Activated naive CD4-positive, alpha-beta T cell treated with anti-CD3 and anti-CD28 coated beads for 36 hours (primary cell): ENCODE measurements at regions of chr10 and their contacts with region 1.

Region 1: GRCh38 chr10:68955832-68956532 is at the start of gene DDX21:
- DNase-seq: peak; percentile 94
- H3K4me3 Mint-ChIP-seq: peak within 1 kb of the TSS; percentile 100
- H3K27ac Mint-ChIP-seq: peak within 1 kb of the TSS; percentile 100
- H3K4me1 Mint-ChIP-seq: peaks cover 44% of the 10 kb centered on the region
- H3K27me3 Mint-ChIP-seq: no peaks in the 10 kb centered on the region
- total RNA-seq, gene DDX21: 155 to 164 TPM

Region 2: GRCh38 chr10:68988530-68989316 is 32.7 kb after region 1 on chr10 and contains the start of gene KIFBP:
- CTCF ChIA-PET with region 1: interaction called, 10 read pairs
- intact Hi-C with region 1: loop called (anchors 1 kb)
- DNase-seq: peak; percentile 94
- H3K4me3 Mint-ChIP-seq: peak within 1 kb of the TSS; percentile 98
- H3K27ac Mint-ChIP-seq: peak within 1 kb of the TSS; percentile 92
- H3K4me1 Mint-ChIP-seq: peaks cover 44% of the 10 kb centered on the region
- H3K27me3 Mint-ChIP-seq: no peaks in the 10 kb centered on the region
- total RNA-seq, gene KIFBP: 10.1 to 10.6 TPM

Region 3: GRCh38 chr10:69092959-69093850 is 137.2 kb after region 1 on chr10:
- CTCF ChIA-PET with region 1: interaction called, 10 read pairs
- intact Hi-C with region 1: loop called (anchors 1 kb)
- DNase-seq: peak; percentile 95
- H3K4me3 Mint-ChIP-seq: peak overlapping the region; percentile 32
- H3K27ac Mint-ChIP-seq: peak overlapping the region; percentile 81
- H3K4me1 Mint-ChIP-seq: peaks cover 52% of the 10 kb centered on the region
- H3K27me3 Mint-ChIP-seq: no peaks in the 10 kb centered on the region

Region 4: GRCh38 chr10:69222157-69223027 is 266.4 kb after region 1 on chr10:
- CTCF ChIA-PET with region 1: no interaction called
- intact Hi-C with region 1: loop called (anchors 2 kb)
- DNase-seq: peak; percentile 93
- H3K4me3 Mint-ChIP-seq: peak overlapping the region; percentile 60
- H3K27ac Mint-ChIP-seq: peak overlapping the region; percentile 85
- H3K4me1 Mint-ChIP-seq: peaks cover 23% of the 10 kb centered on the region
- H3K27me3 Mint-ChIP-seq: no peaks in the 10 kb centered on the region

Region 5: GRCh38 chr10:69392481-69393000 is 436.6 kb after region 1 on chr10:
- CTCF ChIA-PET with region 1: no interaction called
- intact Hi-C with region 1: loop called (anchors 5 kb)
- DNase-seq: peak; percentile 92
- H3K4me3 Mint-ChIP-seq: no peak overlapping the region
- H3K27ac Mint-ChIP-seq: peak overlapping the region; percentile 76
- H3K4me1 Mint-ChIP-seq: peaks cover 23% of the 10 kb centered on the region
- H3K27me3 Mint-ChIP-seq: no peaks in the 10 kb centered on the region